HAP-1 (cell line): ENCODE measurements at regions of chr16 and their contacts with region 1.

Region 1: DNA sequence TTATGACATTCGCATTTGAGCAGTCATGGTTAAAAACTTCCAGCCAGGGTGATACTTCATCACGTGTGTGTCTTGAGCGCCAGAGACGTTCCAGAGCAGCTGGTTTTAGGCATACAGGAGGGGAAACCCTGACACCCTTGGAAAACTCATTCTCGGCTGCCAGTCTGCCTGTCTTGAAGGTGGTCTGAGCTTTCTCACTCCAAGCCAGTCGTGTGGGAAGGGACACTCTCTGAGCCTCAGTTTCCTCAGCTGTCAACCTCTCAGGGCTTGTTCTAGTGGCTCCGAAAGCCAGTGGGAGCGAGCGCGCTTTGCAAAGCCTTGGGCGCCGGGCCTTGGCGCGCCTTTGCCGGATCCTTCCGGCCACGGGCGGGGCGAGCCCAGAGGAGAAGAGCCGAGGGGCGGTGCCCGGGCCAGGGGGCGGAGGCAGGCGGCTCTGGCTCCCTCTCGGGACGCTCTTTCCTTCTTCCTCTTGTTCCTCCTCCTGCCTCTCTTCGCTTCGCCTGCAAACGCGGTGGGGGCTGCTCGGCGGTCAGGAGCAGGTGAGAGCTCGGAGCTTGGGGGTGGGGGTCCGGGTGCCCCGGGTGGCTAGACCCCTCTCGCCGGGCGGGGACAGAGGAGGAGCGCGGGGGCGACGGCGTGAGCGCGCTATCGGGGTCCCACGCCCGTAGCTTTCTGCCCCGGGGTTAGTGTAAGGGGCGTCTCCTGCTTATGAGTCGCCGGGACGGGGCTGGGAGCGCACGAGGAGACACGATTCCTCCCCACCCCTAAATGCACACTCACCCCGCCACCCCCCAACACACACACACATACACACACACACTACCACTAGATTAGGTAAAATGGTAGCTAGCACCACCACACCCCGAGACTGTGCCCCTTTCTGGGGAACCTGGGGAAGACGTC is at the start of gene LDAF1:
- DNase-seq: peak; percentile 90 to 91
- H3K4me3 ChIP-seq: peak within 1 kb of the TSS; percentile 84
- H3K4me1 ChIP-seq: peaks cover 12% of the 10 kb centered on the region
- H3K27me3 ChIP-seq: no peaks in the 10 kb centered on the region

Region 2: DNA sequence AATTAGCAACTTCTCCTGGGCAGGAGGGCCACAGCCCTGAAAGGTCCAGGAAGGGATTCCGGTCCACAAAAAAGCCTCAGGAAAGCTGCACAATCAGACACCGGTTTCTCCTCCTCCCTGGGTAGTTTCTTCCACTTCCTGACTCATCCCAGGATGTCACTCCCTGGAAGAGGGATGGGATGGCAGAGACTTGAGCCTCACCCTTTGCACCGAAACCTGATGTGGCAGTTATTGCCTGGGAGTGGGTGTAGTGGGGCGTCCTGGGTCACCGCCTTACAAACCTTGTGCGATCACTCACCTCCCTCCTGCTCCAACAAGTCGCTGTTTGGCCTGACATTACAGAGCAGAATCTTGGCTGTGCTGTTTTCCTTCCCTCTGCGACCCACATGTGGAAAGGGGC is 187.1 kb before region 1 on chr16:
- in situ Hi-C with region 1: no loop called
- DNase-seq: no peak
- H3K4me3 ChIP-seq: no peak overlapping the region
- H3K4me1 ChIP-seq: no peaks in the 10 kb centered on the region
- H3K27me3 ChIP-seq: no peaks in the 10 kb centered on the region

Region 3: DNA sequence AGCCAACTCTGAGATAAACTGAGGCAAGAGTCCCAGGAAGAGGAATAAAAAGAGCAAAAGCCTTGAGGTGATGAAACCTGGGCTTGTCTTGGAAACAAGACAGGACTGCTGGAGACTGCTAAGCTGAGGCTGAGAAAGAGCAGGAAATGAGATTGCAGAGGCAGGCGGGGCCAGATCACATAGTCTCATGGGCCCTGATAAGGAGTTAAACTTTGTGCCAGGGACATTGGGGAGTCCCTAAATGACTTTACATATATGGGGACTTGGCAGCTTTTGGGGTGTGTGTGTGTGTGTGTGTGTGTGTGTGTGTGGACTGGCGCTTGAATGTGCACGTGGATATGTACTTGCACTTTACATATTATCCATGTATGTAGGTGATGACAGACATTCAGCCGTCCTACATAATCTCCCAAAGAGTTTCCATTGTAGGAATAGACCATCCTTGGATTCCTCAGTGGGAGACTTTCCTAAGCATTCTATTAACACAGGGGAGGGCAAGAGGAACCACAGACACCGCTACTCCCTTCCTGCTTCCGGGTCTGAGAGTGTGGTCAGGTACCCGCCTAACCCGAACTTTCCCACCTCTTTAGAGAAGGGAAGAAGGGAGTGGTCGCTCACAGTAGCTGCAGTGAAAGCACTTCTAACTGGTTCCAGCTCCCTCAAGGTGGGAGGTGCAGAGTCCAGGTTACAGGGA is 134.8 kb before region 1 on chr16:
- in situ Hi-C with region 1: no loop called
- DNase-seq: no peak
- H3K4me3 ChIP-seq: no peak overlapping the region
- H3K4me1 ChIP-seq: no peaks in the 10 kb centered on the region
- H3K27me3 ChIP-seq: no peaks in the 10 kb centered on the region

Region 4: DNA sequence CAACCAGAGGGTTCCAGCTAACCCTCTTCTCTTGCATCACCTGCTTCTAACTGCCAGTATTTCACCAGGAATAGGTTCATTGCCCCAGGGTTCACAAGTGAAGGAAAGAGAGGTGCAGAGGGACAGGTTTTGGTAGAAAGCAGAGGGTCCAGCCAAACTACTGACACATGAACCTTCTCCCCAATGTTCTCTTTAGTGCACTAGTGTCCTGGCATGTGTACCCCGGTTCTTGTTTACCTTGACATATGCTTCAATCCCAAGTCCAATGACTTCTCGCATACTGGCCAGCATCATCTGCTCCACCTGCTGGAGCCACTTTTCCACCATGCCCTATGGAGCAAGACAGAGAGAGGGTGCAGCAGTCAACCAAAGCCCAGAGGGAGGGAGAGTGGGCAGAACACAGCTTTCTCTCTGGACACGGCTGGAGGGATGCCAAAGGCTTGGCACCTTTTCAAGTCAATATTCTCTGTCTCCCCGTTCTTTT is 98.4 kb before region 1 on chr16:
- in situ Hi-C with region 1: no loop called
- DNase-seq: no peak
- H3K4me3 ChIP-seq: no peak overlapping the region
- H3K4me1 ChIP-seq: no peaks in the 10 kb centered on the region
- H3K27me3 ChIP-seq: no peaks in the 10 kb centered on the region

Region 5: GRCh38 chr16:21083729-21084268 is 74.7 kb before region 1 on chr16:
- in situ Hi-C with region 1: no loop called
- DNase-seq: peak; percentile 42 to 83
- H3K4me3 ChIP-seq: no peak overlapping the region
- H3K4me1 ChIP-seq: no peaks in the 10 kb centered on the region
- H3K27me3 ChIP-seq: no peaks in the 10 kb centered on the region

Region 6: DNA sequence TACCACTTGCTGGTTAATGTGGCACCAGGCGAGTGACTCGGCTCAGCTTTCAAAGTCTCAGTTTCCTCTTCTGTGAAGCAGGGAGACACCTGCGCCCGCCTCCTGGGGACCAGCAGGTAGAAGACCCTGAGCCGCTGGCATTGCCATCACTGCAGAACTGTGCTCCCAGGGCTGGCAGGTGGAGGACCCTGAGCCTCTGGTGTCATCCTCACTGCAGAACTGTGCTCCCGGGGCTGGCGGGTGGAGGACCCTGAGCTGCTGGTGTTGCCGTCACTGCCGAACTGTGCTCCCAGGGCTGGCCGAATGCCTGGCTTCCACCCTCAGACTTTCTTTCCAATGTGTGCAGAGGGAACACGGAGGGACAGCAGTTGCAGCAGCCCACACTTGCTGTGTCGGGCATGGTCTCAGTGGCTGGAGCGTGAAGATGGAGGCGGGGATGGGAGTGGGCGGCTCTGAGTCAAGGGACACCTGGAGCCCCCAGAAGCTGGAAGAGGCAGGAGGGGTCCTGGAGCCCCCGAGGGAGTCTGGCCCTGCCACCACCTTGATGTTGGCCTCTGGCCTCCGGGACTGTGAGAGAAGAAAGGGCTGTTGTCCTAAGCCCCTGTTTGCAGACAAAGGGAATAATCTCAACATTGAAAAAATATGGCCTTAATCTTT is 365.1 kb after region 1 on chr16:
- in situ Hi-C with region 1: loop called (anchors 10 kb)
- DNase-seq: no peak
- H3K4me3 ChIP-seq: no peak overlapping the region
- H3K4me1 ChIP-seq: peaks cover 13% of the 10 kb centered on the region
- H3K27me3 ChIP-seq: no peaks in the 10 kb centered on the region

Region 7: DNA sequence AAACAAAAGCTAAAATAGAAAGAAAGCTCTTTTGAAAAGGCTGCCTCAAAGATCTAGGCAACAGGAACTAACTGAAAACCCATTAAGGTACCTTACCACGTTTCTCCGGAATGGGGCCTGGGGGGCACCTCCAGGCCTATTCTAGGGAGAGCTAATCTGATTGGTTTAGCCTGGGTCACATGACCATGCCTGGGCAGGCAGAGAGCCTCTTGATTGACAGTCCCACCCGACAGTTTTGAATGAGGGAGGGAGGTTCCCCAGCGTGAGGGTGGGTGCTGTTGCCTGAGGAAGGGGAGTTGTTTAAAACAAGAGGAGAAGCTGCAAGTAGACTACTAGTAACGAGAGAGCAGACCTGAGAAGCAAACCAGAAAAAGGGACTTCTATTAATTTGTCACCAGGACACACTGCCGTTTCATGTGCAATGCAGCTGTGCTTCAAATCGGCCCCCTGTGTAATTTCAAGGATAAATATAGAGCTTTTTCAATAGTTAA is 1512.1 kb after region 1 on chr16:
- in situ Hi-C with region 1: loop called (anchors 10 kb)
- DNase-seq: peak; percentile 46 to 78
- H3K4me3 ChIP-seq: no peak overlapping the region
- H3K4me1 ChIP-seq: no peaks in the 10 kb centered on the region
- H3K27me3 ChIP-seq: no peaks in the 10 kb centered on the region; the same call in 1 of the 2 replicates